ENCODE measurements at regions of chr1 and their contacts with region 1.

Region 1: GRCh38 chr1:200856716-200857352 is 15.9 kb upstream of the GPR25 start:
- DNase-seq: no peak
- CTCF ChIP-seq: no peak

Region 2: GRCh38 chr1:200837931-200838571 is 18.8 kb before region 1 on chr1:
- CTCF ChIA-PET with region 1: interaction called, 10 read pairs
- POLR2A ChIA-PET with region 1: no interaction called
- DNase-seq: no peak
- CTCF ChIP-seq: peak; percentile 28

Measured in GM10248 (cell line).